HepG2 (cell line): ENCODE measurements at regions of chr2 and their contacts with region 1.

Region 1: GRCh38 chr2:224538561-224539154 is 46.5 kb downstream of the CUL3 start:
- DNase-seq: peak; percentile 18
- ATAC-seq: peak; percentile 41; the same call in 1 of the 3 replicates
- H3K4me3 ChIP-seq: no peak overlapping the region
- H3K27ac ChIP-seq: peak overlapping the region; percentile 10
- H3K4me1 ChIP-seq: peaks cover 6% of the 10 kb centered on the region
- H3K27me3 ChIP-seq: no peaks in the 10 kb centered on the region
- CTCF ChIP-seq: no peak
- EP300 ChIP-seq: no peak
- POLR2A ChIP-seq: no peak
- RAD21 ChIP-seq: no peak

Region 2: GRCh38 chr2:224576088-224576715 is 37.5 kb after region 1 on chr2:
- CTCF ChIA-PET with region 1: no interaction called
- POLR2A ChIA-PET with region 1: no interaction called
- in situ Hi-C with region 1: no loop called
- intact Hi-C with region 1: loop called (anchors 5 kb)
- DNase-seq: no peak
- ATAC-seq: no peak
- H3K4me3 ChIP-seq: no peak overlapping the region
- H3K27ac ChIP-seq: no peak overlapping the region
- H3K4me1 ChIP-seq: peaks cover 46% of the 10 kb centered on the region
- H3K27me3 ChIP-seq: no peaks in the 10 kb centered on the region
- CTCF ChIP-seq: no peak
- EP300 ChIP-seq: no peak
- POLR2A ChIP-seq: no peak
- RAD21 ChIP-seq: no peak

Region 3: GRCh38 chr2:224722250-224722649 is 183.6 kb after region 1 on chr2:
- CTCF ChIA-PET with region 1: no interaction called
- POLR2A ChIA-PET with region 1: no interaction called
- in situ Hi-C with region 1: no loop called
- intact Hi-C with region 1: no loop called
- DNase-seq: no peak
- ATAC-seq: no peak
- H3K4me3 ChIP-seq: no peak overlapping the region
- H3K27ac ChIP-seq: no peak overlapping the region
- H3K4me1 ChIP-seq: 0 out of 2 replicates have a peak, but pooled peaks cover under 1% of the 10 kb centered on the region
- H3K27me3 ChIP-seq: no peaks in the 10 kb centered on the region
- CTCF ChIP-seq: no peak
- EP300 ChIP-seq: no peak
- POLR2A ChIP-seq: no peak
- RAD21 ChIP-seq: no peak